Activated CD8-positive, alpha-beta T cell treated with anti-CD3 and anti-CD28 coated beads for 36 hours (primary cell): ENCODE measurements at regions of chr1 and their contacts with region 1.

Region 1: DNA sequence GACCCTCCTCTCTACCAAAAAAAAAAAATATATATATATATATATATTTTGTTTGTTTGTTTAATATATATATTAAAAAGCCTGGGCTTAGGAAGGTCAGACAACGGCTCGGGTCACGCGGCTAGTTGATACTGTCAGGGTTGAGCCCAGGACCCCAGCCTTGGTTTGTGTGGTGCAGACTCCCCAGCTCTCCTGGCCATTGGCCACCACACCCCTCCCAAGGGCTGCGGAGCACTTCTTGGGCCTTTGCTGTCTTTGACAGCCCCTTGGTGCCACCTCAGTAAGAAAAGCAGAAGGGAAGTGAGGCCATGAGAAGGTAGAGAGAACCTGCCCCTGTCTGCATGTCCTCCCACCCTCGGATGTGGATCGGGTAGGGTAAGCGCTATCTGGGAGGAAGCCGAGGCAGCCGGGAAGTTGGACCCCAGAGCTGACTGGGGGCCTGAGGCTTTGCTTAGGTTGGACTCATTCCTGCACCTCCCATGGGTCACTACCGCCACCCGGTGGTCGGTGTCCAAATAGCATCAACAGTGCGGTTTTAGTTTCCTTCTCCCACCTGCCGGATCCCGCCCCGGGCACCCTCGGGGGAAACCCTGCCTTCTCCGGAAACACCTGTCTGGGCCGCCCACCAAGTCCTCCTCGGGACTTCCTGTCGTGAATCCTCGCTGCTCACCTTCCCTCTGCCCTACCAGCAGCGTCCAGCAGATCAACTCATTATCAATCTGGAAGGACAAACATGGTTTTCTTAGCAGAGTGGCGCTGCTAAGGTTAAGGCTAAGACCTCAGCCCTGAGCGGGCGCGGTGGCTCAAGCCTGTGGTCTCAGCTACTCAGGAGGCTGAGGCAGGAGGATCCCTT is 29.8 kb upstream of the GNPAT start:
- DNase-seq: peak; percentile 97
- ATAC-seq: peak; percentile 97
- H3K4me3 Mint-ChIP-seq: peak overlapping the region; percentile 67
- H3K27ac Mint-ChIP-seq: peak overlapping the region; percentile 75
- H3K4me1 Mint-ChIP-seq: peaks cover 28% of the 10 kb centered on the region
- H3K27me3 Mint-ChIP-seq: no peaks in the 10 kb centered on the region
- CTCF ChIP-seq: peak; percentile 90

Region 2: DNA sequence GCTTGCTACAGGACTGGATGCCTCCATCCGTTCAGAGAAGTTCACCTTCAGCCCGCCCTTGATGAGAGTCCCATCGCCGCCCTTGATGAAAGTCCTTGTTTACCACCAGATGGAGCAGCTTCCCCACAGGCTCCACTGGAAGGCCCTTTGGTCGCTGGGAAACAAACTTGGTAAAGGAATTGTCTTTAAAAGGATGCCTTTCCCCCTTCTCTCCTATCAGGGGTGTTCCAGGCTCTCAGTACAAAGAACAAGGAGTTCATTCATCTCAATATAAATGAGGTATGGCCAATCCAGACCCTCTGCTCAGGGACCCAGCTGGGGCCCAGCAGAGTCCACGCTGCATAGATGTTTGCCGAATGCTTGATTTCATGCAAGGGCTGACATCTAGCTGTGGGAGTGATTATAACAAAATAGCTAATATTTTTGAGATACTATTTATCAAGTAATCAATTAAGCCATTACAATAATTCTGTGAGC is 413.3 kb before region 1 on chr1:
- CTCF ChIA-PET with region 1: interaction called, 4 read pairs
- POLR2A ChIA-PET with region 1: no interaction called
- intact Hi-C with region 1: loop called (anchors 5 kb)
- DNase-seq: peak; percentile 16
- ATAC-seq: no peak
- H3K4me3 Mint-ChIP-seq: no peak overlapping the region
- H3K27ac Mint-ChIP-seq: no peak overlapping the region
- H3K4me1 Mint-ChIP-seq: no peaks in the 10 kb centered on the region
- H3K27me3 Mint-ChIP-seq: peaks cover 8% of the 10 kb centered on the region
- CTCF ChIP-seq: no peak

Region 3: DNA sequence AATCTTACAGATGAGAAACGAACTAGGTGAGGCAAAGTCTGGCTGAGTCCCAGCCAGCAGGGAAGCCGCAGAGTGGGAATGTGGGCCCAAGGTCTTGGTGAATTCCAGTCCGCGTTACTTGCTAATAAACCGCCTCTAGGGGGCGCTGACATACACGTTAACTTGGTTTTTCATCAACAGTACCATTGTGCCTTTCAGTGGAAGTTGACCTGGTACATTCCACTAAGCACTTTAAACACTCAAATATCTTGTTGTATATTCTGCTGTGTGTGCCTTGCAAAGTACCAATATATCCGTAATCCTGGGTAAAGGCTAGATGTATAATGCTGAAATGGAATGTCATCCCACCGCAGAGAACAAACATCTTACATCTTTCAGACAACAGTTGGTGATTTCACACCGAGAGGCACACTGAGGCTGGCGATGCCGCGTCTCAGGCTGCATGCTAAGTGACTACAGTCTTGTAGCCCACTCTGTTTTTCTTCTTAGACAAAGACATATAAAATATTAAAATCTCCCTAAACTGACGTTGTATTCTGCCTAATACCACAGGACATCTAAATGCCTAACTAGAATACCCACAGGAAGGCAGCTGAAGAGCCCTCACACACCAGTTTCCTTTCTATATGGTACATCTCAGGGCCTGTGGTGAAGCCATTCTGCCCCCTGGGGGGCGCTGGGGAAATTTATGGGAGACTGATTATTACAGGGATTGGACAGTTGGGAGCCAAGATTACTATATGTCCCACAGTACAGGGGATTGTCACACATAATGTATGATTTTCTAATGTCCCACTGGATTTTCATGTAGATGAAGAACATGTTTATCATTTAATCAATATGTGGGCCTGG is 293.7 kb before region 1 on chr1:
- CTCF ChIA-PET with region 1: interaction called, 10 read pairs
- POLR2A ChIA-PET with region 1: no interaction called
- intact Hi-C with region 1: loop called (anchors 1 kb)
- DNase-seq: peak; percentile 90
- ATAC-seq: peak; percentile 79
- H3K4me3 Mint-ChIP-seq: no peak overlapping the region
- H3K27ac Mint-ChIP-seq: peak overlapping the region; percentile 40
- H3K4me1 Mint-ChIP-seq: peaks cover 8% of the 10 kb centered on the region
- H3K27me3 Mint-ChIP-seq: no peaks in the 10 kb centered on the region
- CTCF ChIP-seq: peak; percentile 84

Region 4: DNA sequence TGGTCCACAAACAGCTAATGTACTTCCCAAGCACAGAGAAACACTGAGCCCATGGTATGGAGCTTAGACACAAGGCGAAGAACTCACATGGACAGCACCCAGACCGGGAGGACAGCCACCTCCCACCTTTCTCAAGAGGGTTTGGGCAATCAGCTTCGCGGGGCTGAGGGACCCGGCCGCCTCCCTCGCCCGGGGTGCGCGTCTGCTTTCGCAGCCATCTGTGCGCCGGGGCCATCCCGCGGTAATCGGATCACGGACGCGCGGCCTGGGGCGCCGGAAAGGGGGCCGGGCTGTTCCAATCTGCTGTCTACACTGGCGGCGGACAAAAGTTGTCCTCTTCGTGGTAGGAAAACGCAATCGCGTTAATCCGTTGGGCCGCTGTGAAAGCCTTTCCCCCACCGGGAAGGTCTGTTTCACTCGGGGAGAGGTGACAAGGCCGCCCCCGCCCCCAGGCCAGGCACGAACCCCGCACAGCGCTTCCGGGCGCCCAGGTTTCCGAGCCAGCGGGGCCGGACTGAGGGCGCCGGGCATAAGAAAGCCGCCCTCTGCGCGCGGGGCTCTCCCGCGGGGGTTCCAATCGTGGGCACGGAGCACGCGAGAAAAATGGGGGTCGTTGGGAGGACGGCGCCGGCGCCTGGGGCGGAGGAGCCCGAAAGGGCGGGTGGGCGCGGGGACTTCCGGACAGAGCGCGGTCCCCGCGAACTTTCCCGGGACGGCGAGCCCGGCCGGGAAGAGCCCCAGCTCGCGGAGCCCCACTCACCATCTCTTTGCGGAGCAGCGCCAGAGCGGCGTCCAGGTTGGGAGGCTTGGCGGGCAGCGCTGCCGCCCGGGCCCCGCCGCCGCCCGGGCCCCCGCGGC is 171.8 kb before region 1 on chr1:
- CTCF ChIA-PET with region 1: interaction called, 6 read pairs
- POLR2A ChIA-PET with region 1: no interaction called
- intact Hi-C with region 1: loop called (anchors 10 kb)
- DNase-seq: peak; percentile 58
- ATAC-seq: peak; percentile 53
- H3K4me3 Mint-ChIP-seq: peak overlapping the region; percentile 79
- H3K27ac Mint-ChIP-seq: peak overlapping the region; percentile 30
- H3K4me1 Mint-ChIP-seq: peaks cover 32% of the 10 kb centered on the region
- H3K27me3 Mint-ChIP-seq: peaks cover 2% of the 10 kb centered on the region
- CTCF ChIP-seq: no peak